Activated T-helper 1 cell treated with anti-CD3 and anti-CD28 coated beads, Interleukin-12 subunit alpha, Interleukin-12 subunit beta, Interleukin-2, Interleukin-4 antibody, amounts not matched to agents 30 ng/mL and 10 ng/mL and 1 ng/mL, durations not matched to agents 14 hours and 24 hours and 36 hours (primary cell): ENCODE measurements at regions of chr17 and their contacts with region 1.

Region 1: GRCh38 chr17:27455914-27456680 is at the start of gene KSR1:
- DNase-seq: peak; percentile 81
- H3K4me3 Mint-ChIP-seq: peak within 1 kb of the TSS; percentile 99
- H3K27ac Mint-ChIP-seq: peak within 1 kb of the TSS; percentile 94
- H3K4me1 Mint-ChIP-seq: peaks cover 52% of the 10 kb centered on the region
- H3K27me3 Mint-ChIP-seq: peaks cover 3% of the 10 kb centered on the region
- total RNA-seq, gene KSR1: 119 and 122 TPM in 2 replicates

Region 2: DNA sequence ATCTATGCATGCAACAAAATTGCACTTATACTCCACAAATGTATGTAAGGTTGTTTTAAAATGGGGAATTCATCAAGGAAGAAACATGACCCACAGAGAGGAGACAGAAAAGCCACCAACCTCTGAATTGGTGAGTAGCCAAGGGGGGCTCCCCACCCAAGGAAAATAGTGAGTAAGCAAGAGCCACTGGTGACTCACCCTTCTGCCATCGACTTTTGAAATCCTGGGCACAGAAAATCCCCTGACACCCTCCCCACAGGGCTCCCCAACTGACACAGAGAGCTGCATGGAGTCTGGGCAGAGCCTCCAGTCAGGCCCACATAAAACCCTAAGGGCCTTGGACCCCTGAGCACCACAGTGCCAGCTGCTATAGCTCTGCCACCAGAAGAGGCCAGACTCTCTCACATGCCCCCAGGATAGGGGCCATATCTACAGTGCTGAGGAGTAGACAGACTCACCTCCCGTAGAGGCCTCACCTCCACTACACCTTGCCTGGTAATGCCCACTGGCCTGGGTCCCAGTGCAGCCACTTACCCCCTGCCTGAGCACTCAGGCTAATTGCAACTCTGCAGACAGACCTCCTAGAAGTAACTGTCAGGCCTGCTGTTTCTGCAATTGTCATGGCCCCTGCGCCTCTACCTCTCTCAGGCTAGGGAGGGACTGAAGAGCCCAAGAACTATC is 406.9 kb before region 1 on chr17:
- intact Hi-C with region 1: no loop called
- DNase-seq: no peak
- H3K4me3 Mint-ChIP-seq: no peak overlapping the region
- H3K27ac Mint-ChIP-seq: no peak overlapping the region
- H3K4me1 Mint-ChIP-seq: no peaks in the 10 kb centered on the region
- H3K27me3 Mint-ChIP-seq: peaks cover 2% of the 10 kb centered on the region

Region 3: GRCh38 chr17:27353461-27354050 is 102.5 kb before region 1 on chr17:
- intact Hi-C with region 1: loop called (anchors 1 kb)
- DNase-seq: peak; percentile 86
- H3K4me3 Mint-ChIP-seq: peak overlapping the region; percentile 82
- H3K27ac Mint-ChIP-seq: peak overlapping the region; percentile 95
- H3K4me1 Mint-ChIP-seq: peaks cover 45% of the 10 kb centered on the region
- H3K27me3 Mint-ChIP-seq: no peaks in the 10 kb centered on the region

Region 4: DNA sequence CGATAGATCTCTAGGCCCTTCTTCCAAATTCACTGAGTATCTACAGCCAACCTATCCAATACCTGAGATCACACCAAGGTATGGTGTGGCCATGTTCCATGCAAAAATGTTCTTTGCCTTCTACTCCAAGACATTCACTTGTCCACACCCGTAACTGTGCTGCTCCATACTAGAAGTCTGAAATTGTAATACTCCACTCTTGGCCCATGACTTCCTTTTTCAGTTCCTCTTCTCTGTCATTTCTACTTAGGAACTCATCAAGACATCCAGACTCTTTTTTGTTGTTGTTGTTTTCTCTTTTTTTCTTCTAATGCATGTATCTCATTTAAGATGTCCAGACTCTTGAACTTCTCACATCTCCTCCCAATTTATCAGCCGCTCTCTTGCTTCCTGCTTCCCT is 42.3 kb before region 1 on chr17:
- intact Hi-C with region 1: loop called (anchors 1 kb)
- DNase-seq: no peak
- H3K4me3 Mint-ChIP-seq: no peak overlapping the region
- H3K27ac Mint-ChIP-seq: no peak overlapping the region
- H3K4me1 Mint-ChIP-seq: no peaks in the 10 kb centered on the region
- H3K27me3 Mint-ChIP-seq: peaks cover 7% of the 10 kb centered on the region

Region 5: GRCh38 chr17:27473748-27474609 is 17.9 kb after region 1 on chr17:
- intact Hi-C with region 1: loop called (anchors 1 kb)
- DNase-seq: peak; percentile 83
- H3K4me3 Mint-ChIP-seq: peak overlapping the region; percentile 58
- H3K27ac Mint-ChIP-seq: peak overlapping the region; percentile 97
- H3K4me1 Mint-ChIP-seq: peaks cover 95% of the 10 kb centered on the region
- H3K27me3 Mint-ChIP-seq: no peaks in the 10 kb centered on the region

Region 6: DNA sequence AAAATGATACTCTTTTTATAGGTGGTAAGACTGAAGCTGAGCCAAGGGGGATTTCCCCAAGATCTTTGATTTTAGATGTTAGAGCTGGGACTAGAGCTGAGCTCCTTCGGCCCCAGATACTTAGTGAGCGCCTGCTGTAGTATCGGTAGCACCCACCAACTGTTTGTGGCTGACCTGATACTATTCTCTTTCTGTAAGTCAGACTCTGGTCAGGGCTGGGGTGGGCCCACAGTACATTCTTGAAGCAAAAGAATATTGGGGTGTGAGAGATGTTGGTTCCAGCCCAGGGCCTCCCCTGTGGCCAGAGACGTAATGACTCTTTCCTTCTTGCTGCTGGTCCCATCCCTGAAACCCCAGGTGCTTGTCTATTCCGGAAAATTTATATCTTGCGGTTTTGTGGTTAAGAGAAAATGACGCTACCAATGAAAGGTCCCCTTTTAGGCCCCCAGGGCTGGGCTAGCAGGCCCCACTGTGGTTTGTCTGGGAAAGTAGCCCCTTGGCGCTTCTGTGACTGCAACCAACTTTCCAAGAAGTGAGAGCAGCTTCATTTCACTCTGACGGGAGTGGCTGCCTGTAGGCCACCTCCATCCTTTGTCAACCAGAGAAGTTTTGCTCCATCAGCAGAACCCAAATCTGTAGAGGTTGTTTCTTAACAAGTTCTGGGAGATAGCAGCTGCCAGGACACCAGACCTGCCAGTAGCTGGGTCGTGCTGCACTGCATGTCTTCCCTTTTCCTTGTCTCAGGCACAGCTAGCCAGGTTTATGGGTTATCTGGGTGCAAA is 88.4 kb after region 1 on chr17:
- intact Hi-C with region 1: loop called (anchors 1 kb)
- DNase-seq: peak; percentile 66
- H3K4me3 Mint-ChIP-seq: peak overlapping the region; percentile 61
- H3K27ac Mint-ChIP-seq: peak overlapping the region; percentile 97
- H3K4me1 Mint-ChIP-seq: peaks cover 84% of the 10 kb centered on the region
- H3K27me3 Mint-ChIP-seq: peaks cover 2% of the 10 kb centered on the region

Region 7: DNA sequence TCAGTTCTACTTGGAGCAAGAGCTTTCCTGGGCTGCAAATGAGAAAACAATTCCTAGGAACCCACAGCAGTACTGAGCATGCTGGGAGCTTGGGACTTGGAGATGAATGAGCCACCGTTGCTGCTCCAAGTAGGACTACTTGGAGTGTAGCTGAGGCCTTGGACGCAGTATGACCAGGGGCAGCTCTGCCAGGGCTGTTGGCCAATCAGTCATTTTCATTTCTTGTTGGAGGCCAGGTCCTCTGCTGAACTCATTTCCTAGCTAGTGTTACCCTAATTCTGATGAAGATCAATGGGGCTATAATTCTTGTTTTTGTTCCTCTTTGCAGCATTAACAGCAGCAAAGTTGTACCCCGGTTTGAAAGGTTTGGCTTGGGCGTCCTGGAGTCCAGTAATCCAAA is 166.9 kb after region 1 on chr17:
- intact Hi-C with region 1: no loop called
- DNase-seq: no peak
- H3K4me3 Mint-ChIP-seq: no peak overlapping the region
- H3K27ac Mint-ChIP-seq: no peak overlapping the region
- H3K4me1 Mint-ChIP-seq: peaks cover 20% of the 10 kb centered on the region
- H3K27me3 Mint-ChIP-seq: no peaks in the 10 kb centered on the region